PC-9 (cell line): ENCODE measurements at regions of chr5 and their contacts with region 1.

Region 1: DNA sequence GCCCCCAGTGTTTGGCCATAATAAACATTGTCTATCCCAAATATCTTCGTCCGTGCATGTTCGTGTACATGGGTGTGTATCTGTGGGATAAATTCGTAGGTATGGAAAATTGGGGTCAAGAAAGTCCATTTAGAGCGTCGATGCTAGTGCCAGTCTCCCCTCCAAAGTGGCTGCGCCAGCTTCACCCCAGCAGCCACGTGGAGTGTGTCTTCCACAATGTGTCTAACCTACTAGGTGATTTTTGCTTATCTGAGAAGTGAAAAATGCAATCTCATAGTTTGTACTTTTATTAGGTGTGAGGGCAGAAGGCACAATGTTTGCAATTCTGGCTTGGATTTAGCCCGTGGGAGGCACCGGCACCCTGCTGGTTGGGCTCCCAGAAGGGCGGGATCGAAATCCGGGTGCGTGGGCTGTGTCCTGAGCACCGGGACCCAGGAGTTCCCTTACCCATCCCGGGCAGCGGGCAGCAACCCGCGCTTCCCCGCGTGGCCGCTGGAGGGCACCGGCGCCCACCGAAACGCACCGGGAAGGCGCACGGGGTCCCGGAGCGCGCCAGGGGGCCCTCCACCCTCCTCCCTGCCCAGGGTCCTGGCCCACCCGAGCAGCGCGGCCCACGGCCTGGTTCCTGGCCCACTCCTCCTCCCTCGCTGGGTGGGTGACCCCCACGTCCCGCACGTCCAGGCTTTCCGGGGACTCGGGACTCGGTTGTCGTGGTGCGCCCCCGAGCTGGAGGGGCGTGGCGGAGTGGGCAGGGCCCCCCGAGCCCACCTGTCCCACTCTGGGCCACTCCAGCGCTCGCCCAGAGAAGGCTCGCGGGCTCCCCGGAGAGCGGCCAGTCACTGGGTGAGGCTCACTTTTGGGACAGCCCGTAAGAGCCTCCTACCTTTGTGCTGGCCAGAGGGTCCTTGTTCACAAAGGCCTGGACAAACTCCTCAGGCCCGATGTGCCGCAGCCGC is 55.4 kb upstream of the RNF130 start:
- DNase-seq: peak; percentile 30 to 61
- H3K4me3 ChIP-seq: no peak overlapping the region
- H3K27ac ChIP-seq: no peak overlapping the region
- H3K4me1 ChIP-seq: no peaks in the 10 kb centered on the region
- H3K27me3 ChIP-seq: peaks cover 11% of the 10 kb centered on the region
- CTCF ChIP-seq: peak; percentile 87

Region 2: DNA sequence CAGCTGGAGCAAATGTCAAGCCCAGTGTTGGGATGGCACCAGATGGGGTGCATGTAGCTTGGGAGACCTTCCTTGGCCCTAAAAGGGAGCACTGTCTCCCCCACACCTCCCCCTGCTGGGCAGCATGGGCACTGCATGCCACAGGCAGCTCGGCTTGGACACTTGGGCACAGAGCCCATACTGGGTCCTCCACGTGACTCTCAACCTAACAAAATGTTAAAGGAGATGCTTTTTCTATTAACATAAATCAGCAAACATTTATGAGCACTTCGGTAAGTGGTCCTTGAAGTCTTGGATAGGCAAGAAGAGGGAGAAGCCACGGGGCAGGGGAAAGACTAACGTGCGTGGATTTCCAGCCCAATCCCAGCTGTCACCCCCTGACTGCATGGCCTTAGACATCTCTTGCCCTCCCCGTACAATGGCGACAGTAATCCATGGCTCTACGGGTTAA is 188.8 kb after region 1 on chr5:
- CTCF ChIA-PET with region 1: no interaction called
- POLR2A ChIA-PET with region 1: no interaction called
- intact Hi-C with region 1: loop called (anchors 1 kb)
- DNase-seq: peak; percentile 43 to 73
- H3K4me3 ChIP-seq: no peak overlapping the region
- H3K27ac ChIP-seq: no peak overlapping the region
- H3K4me1 ChIP-seq: no peaks in the 10 kb centered on the region
- H3K27me3 ChIP-seq: no peaks in the 10 kb centered on the region
- CTCF ChIP-seq: peak; percentile 98

Region 3: DNA sequence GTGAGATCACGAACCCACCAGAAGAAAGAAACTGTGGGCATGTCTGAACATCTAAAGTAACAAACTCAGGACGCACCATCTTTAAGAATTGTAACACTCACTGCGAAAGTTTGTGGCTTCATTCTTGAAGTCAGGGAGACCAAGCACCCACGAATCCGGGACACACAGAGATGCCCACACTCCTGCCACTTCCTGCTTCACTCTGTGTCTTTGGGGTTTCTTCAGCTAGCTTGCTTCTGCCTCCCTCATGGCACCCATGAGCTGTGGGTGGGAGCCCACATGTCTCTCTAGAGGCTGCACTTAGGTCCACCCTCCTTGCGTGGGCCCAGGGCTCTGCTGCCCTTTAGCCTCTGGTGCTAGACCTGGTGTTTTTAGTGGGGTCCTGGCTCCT is 306.0 kb after region 1 on chr5:
- CTCF ChIA-PET with region 1: no interaction called
- POLR2A ChIA-PET with region 1: no interaction called
- intact Hi-C with region 1: no loop called
- DNase-seq: no peak
- H3K4me3 ChIP-seq: no peak overlapping the region
- H3K27ac ChIP-seq: no peak overlapping the region
- H3K4me1 ChIP-seq: no peaks in the 10 kb centered on the region
- H3K27me3 ChIP-seq: no peaks in the 10 kb centered on the region
- CTCF ChIP-seq: no peak

Region 4: DNA sequence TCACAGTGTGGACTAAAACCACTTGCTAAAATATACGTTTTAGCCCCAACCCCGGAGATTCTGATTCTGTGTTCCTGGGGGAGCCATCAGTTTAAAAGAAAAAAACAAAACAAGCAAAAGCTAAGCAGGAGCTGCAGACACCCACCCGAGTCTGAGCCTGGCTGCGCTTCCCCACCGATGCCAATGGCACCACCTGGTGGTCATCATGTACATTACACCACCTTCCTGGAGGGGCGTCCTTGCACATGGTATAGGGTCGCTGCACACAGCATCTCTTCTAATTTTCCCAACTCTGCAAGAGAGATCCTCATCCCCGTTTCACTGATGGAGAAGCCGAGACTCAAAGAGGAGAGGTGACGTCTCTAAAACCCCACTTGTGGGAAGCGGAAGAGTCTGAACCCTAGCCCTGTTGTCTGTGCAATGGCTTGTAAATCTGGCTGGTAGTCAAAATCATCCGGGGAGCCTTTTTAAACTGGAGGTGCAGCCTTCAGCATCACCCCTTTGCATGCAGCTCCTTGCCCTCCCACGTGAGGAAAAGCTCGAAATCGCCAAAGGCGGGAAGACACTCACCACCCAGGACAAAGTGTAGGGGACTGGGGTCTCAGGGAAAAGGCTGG is 344.1 kb after region 1 on chr5:
- CTCF ChIA-PET with region 1: no interaction called
- POLR2A ChIA-PET with region 1: no interaction called
- intact Hi-C with region 1: loop called (anchors 1 kb)
- DNase-seq: peak in 1 of 2 experiments; percentile 63
- H3K4me3 ChIP-seq: no peak overlapping the region
- H3K27ac ChIP-seq: no peak overlapping the region
- H3K4me1 ChIP-seq: no peaks in the 10 kb centered on the region; the same call in 1 of the 2 replicates
- H3K27me3 ChIP-seq: no peaks in the 10 kb centered on the region
- CTCF ChIP-seq: peak; percentile 98

Region 5: DNA sequence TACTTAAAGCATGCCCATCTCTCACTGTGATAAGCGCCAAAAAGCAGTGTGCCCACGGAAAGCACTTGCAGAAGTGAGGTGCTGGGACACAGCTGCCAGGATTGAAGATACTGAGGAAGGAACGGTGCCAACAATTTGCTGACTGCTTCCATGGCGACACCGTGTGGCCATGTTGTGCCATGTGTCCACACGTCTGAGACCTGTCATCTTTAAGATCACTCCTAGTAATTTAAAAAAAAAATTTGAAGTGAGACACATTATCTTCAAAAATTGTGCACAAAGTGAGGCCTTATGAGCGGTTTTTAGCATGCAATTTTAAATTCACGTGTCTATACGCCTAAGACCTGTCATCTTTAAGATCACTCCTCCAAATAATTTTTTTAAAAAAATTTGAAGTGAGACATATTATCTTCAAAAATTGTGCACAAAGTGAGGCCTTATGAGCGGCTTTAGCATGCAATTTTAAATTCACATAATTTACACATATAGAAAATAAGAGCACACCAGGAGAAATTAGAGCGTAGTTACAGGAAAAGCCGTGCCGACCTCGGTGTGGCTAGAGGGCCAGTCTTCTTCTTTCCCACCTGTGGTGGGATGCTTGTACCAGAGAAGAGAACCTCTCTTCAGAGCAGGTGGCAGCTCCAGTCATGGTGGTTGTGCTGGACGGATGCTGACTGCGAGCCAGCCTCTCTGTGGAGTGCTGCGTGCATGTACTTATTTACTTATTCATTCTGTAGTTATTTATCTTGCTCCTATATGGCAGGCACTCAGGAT is 543.8 kb after region 1 on chr5:
- CTCF ChIA-PET with region 1: no interaction called
- POLR2A ChIA-PET with region 1: no interaction called
- intact Hi-C with region 1: loop called (anchors 5 kb)
- DNase-seq: peak in 1 of 2 experiments; percentile 52
- H3K4me3 ChIP-seq: no peak overlapping the region
- H3K27ac ChIP-seq: no peak overlapping the region
- H3K4me1 ChIP-seq: no peaks in the 10 kb centered on the region
- H3K27me3 ChIP-seq: peaks cover 29% of the 10 kb centered on the region
- CTCF ChIP-seq: peak; percentile 72